ENCODE measurements at regions of chr7 and their contacts with region 1.

Region 1: GRCh38 chr7:96075510-96076349 is 246.2 kb downstream of the SLC25A13 start:
- DNase-seq: peak; percentile 71
- H3K27ac ChIP-seq: no peak overlapping the region
- CTCF ChIP-seq: peak; percentile 90

Region 2: DNA sequence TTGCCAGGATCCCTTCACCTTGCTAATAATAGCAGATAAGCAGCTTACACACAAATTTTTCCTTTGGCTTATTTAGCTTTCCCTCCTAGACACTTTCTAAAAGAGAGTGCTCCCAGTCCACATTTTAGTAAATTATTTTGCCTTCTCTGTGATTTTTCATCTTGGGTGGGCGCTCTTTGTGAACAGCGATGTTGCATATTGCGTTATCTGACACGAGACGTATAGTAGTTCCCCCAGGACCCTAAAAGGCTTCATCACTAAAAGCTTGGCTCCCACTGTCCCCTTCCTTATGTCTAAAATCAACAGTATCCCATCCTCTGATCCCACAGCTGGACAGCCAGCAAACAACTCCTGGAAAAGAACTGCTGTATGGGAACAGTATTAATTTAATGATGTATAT is 70.5 kb before region 1 on chr7:
- CTCF ChIA-PET with region 1: no interaction called
- POLR2A ChIA-PET with region 1: no interaction called
- DNase-seq: no peak
- H3K27ac ChIP-seq: no peak overlapping the region
- CTCF ChIP-seq: no peak

Region 3: DNA sequence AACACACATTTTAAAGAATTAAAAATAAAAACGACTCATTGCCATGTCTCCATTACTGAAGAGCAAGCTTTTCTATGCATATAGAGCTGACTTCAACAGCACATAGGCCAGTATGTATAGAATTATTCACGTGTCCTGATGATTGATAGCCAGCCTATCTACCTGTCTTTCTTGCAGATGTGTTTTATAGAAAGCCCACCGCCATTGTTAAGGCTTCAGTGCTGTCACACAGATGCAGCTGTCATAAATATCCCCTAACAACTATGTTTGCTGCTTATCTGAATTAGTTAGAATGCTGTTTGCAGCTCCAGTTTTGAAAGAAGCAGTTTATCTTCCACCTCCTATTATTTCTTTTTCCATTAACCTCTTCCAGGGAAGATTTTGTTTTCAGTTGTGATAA is 10.2 kb after region 1 on chr7:
- CTCF ChIA-PET with region 1: interaction called, 11 read pairs
- POLR2A ChIA-PET with region 1: no interaction called
- DNase-seq: no peak
- H3K27ac ChIP-seq: no peak overlapping the region
- CTCF ChIP-seq: no peak

Region 4: DNA sequence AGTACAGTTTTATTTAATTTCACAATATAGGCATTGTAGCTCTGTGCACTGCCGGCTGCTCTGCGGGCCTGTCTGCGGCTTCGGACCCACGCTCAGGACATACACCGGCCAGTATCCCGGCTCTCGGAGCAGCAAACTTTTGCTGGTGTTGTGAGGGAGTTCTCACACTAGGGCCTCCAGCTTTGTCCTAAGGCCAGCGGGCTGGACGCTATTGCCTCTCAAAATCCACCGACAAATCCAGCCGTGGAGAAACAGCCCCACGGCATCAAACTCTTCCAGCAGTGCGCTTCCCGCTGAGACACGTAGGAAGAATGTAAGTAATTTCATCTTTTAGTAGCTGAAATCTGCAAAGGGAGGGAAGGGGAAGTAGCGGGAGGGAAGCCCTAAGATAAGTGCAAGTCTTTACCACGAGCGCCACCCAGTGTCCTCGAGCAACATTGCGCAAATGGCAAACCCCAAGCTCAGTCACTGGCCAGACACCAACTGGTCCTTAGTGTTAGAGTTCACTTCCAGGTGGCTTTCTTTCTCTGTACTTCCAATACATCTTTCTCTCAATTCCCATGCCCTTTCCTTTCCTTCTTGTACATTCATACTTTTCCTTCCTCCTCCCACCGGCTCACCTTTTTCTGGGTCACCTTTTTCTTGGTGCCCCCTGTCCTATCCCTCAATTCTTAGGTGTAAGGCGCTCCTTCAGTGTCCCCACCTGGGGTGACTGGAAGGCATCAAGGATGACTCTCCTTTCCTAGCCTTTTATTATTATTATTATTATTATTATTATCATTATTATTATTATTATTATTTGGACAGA is 951.9 kb after region 1 on chr7:
- CTCF ChIA-PET with region 1: interaction called, 10 read pairs
- POLR2A ChIA-PET with region 1: interaction called, 3 read pairs
- DNase-seq: peak; percentile 72
- H3K27ac ChIP-seq: no peak overlapping the region
- CTCF ChIP-seq: peak; percentile 88

Measured in RWPE1 (cell line).